ENCODE measurements at regions of chr7 and their contacts with region 1.

Region 1: DNA sequence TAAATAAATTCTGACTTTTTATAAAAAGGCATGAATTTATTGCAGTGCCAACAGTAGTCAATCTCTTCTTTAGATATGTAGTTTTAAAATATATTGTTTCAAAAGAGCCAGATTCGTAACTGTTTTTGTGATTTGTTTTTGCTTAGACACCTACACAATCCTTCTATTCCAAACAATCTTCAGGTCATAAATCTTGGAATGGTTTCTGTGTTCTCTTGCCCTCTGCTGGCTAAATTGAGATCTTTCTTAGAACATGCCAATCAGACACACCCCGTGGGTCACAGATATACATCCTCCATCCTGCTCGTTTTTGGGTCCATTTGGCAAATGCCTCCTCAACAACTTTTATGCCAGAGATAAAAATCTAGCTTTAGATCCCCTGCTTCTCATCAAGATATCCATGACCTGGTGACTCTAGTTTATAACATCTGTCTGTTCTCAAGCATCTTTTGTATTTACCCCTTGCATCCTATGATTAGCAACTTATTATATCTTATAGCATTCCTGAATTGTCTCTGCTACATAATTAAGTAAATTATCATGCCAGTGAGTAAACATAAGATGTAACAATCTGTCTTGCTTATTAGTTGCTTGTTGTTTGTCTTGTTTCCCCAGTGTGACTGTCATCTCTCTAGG is 35.3 kb upstream of the IFRD1 start:
- DNase-seq: peak; percentile 38
- ATAC-seq: peak; percentile 72
- H3K4me3 ChIP-seq: no peak overlapping the region
- H3K27ac ChIP-seq: no peak overlapping the region
- H3K4me1 ChIP-seq: peaks cover 3% of the 10 kb centered on the region; the same call in 1 of the 2 replicates
- H3K27me3 ChIP-seq: peaks cover 8% of the 10 kb centered on the region
- CTCF ChIP-seq: peak; percentile 57
- POLR2A ChIP-seq: no peak
- RAD21 ChIP-seq: peak; percentile 60

Region 2: GRCh38 chr7:110590415-110590814 is 1824.6 kb before region 1 on chr7:
- CTCF ChIA-PET with region 1: no interaction called
- POLR2A ChIA-PET with region 1: no interaction called
- dilution Hi-C with region 1: no loop called
- in situ Hi-C with region 1: no loop called
- intact Hi-C with region 1: no loop called
- DNase-seq: no peak
- ATAC-seq: no peak
- H3K4me3 ChIP-seq: no peak overlapping the region
- H3K27ac ChIP-seq: no peak overlapping the region
- H3K4me1 ChIP-seq: peaks cover 16% of the 10 kb centered on the region
- H3K27me3 ChIP-seq: no peaks in the 10 kb centered on the region
- CTCF ChIP-seq: no peak
- POLR2A ChIP-seq: no peak
- RAD21 ChIP-seq: no peak

Region 3: DNA sequence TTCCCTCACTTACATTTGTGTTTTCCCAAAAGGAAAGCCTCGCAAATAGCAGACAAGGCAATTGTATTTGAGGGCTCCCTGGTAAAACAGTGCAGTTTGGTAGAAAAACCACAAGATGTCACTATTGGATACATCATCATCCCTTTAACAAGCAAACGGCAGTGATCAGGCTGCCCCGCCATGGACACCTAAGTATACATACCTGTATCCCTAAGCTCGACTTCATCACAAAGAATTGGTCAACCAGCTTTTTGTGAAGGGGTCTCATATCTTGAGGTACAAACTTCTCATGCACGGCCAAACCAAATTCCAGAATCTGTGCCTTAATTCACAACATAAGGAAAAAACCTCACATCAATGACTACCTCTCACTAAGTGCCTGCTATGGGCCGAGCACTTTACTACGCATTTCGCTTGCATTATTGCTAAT is 673.1 kb before region 1 on chr7:
- CTCF ChIA-PET with region 1: no interaction called
- POLR2A ChIA-PET with region 1: no interaction called
- dilution Hi-C with region 1: no loop called
- in situ Hi-C with region 1: loop called (anchors 10 kb)
- intact Hi-C with region 1: no loop called
- DNase-seq: peak; percentile 76
- ATAC-seq: peak; percentile 89
- H3K4me3 ChIP-seq: no peak overlapping the region
- H3K27ac ChIP-seq: no peak overlapping the region
- H3K4me1 ChIP-seq: peaks cover 2% of the 10 kb centered on the region; the same call in 1 of the 2 replicates
- H3K27me3 ChIP-seq: no peaks in the 10 kb centered on the region
- CTCF ChIP-seq: peak; percentile 80
- POLR2A ChIP-seq: no peak
- RAD21 ChIP-seq: peak; percentile 83

Region 4: GRCh38 chr7:111752022-111752582 is 662.9 kb before region 1 on chr7:
- CTCF ChIA-PET with region 1: interaction called, 3 read pairs
- POLR2A ChIA-PET with region 1: no interaction called
- dilution Hi-C with region 1: no loop called
- in situ Hi-C with region 1: loop called (anchors 10 kb)
- intact Hi-C with region 1: loop called (anchors 2 kb)
- DNase-seq: peak; percentile 44
- ATAC-seq: peak; percentile 67
- H3K4me3 ChIP-seq: no peak overlapping the region
- H3K27ac ChIP-seq: no peak overlapping the region
- H3K4me1 ChIP-seq: peaks cover 2% of the 10 kb centered on the region; the same call in 1 of the 2 replicates
- H3K27me3 ChIP-seq: no peaks in the 10 kb centered on the region
- CTCF ChIP-seq: peak; percentile 80
- POLR2A ChIP-seq: no peak
- RAD21 ChIP-seq: peak; percentile 75

Region 5: GRCh38 chr7:111763221-111763801 is 651.7 kb before region 1 on chr7:
- CTCF ChIA-PET with region 1: interaction called, 3 read pairs
- POLR2A ChIA-PET with region 1: no interaction called
- dilution Hi-C with region 1: no loop called
- in situ Hi-C with region 1: no loop called
- intact Hi-C with region 1: loop called (anchors 1 kb)
- DNase-seq: peak; percentile 71
- ATAC-seq: peak; percentile 92
- H3K4me3 ChIP-seq: no peak overlapping the region
- H3K27ac ChIP-seq: no peak overlapping the region
- H3K4me1 ChIP-seq: peaks cover 2% of the 10 kb centered on the region; the same call in 1 of the 2 replicates
- H3K27me3 ChIP-seq: no peaks in the 10 kb centered on the region
- CTCF ChIP-seq: peak; percentile 77
- POLR2A ChIP-seq: no peak
- RAD21 ChIP-seq: peak; percentile 78

Region 6: GRCh38 chr7:111855161-111855856 is 559.7 kb before region 1 on chr7:
- CTCF ChIA-PET with region 1: no interaction called
- POLR2A ChIA-PET with region 1: no interaction called
- dilution Hi-C with region 1: no loop called
- in situ Hi-C with region 1: no loop called
- intact Hi-C with region 1: loop called (anchors 2 kb)
- DNase-seq: peak; percentile 79
- ATAC-seq: peak; percentile 97
- H3K4me3 ChIP-seq: no peak overlapping the region
- H3K27ac ChIP-seq: no peak overlapping the region
- H3K4me1 ChIP-seq: no peaks in the 10 kb centered on the region
- H3K27me3 ChIP-seq: no peaks in the 10 kb centered on the region
- CTCF ChIP-seq: peak; percentile 67
- POLR2A ChIP-seq: no peak
- RAD21 ChIP-seq: peak; percentile 68

Region 7: DNA sequence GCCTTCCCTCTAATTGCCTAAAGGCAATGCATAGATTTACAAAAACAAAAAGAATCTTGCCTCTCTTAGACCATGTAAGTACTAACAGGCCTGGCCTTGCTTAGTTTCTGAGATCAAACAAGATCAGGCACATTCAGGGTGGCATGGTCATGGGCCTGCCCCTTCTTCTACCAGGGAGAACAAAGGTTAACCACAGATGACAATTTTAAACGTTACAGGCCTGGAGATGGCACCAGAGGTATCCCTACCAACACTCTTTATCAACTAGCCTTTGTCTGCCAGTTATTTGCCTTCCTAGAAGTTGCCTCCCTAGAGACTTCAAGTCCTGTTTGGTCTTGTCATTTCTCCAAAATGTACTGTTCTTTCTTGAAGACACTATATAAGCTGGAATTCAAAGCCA is 461.4 kb before region 1 on chr7:
- CTCF ChIA-PET with region 1: no interaction called
- POLR2A ChIA-PET with region 1: no interaction called
- dilution Hi-C with region 1: no loop called
- in situ Hi-C with region 1: no loop called
- intact Hi-C with region 1: loop called (anchors 10 kb)
- DNase-seq: no peak
- ATAC-seq: no peak
- H3K4me3 ChIP-seq: no peak overlapping the region
- H3K27ac ChIP-seq: no peak overlapping the region
- H3K4me1 ChIP-seq: no peaks in the 10 kb centered on the region
- H3K27me3 ChIP-seq: no peaks in the 10 kb centered on the region
- CTCF ChIP-seq: no peak
- POLR2A ChIP-seq: no peak
- RAD21 ChIP-seq: no peak

Region 8: DNA sequence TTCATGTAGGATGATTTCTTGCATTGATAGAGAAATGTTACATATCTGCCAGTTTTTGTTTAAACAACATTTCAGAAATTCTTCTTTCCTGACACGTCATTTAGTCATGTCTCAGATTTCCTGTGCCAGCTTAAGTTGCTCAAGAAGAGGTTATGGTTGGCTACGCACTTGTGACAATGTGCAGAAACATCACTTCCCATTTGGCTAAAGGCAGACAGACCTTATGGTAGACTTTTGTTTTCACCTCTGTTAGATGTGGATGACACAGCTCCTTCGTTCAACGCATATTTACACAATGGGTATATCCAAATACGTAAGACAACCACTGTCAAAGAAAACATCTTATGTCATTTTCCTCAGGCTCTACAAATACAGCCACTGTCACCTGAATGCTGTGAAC is 334.5 kb before region 1 on chr7:
- CTCF ChIA-PET with region 1: no interaction called
- POLR2A ChIA-PET with region 1: no interaction called
- dilution Hi-C with region 1: no loop called
- in situ Hi-C with region 1: no loop called
- intact Hi-C with region 1: loop called (anchors 10 kb)
- DNase-seq: peak; percentile 96
- ATAC-seq: peak; percentile 85
- H3K4me3 ChIP-seq: no peak overlapping the region
- H3K27ac ChIP-seq: no peak overlapping the region
- H3K4me1 ChIP-seq: peaks cover 6% of the 10 kb centered on the region
- H3K27me3 ChIP-seq: no peaks in the 10 kb centered on the region
- CTCF ChIP-seq: no peak
- POLR2A ChIP-seq: no peak
- RAD21 ChIP-seq: no peak

Measured in IMR-90 (cell line).